ENCODE measurements at regions of chr12 and their contacts with region 1.

Region 1: GRCh38 chr12:123713398-123713797 is 1.2 kb downstream of the ATP6V0A2 start:
- DNase-seq: peak; percentile 35
- ATAC-seq: peak; percentile 11
- H3K4me3 Mint-ChIP-seq: peak overlapping the region; percentile 96
- H3K27ac Mint-ChIP-seq: peak overlapping the region; percentile 96
- H3K4me1 Mint-ChIP-seq: peaks cover 46% of the 10 kb centered on the region
- H3K27me3 Mint-ChIP-seq: no peaks in the 10 kb centered on the region

Region 2: GRCh38 chr12:122888232-122888867 is 825.0 kb before region 1 on chr12:
- CTCF ChIA-PET with region 1: no interaction called
- POLR2A ChIA-PET with region 1: no interaction called
- intact Hi-C with region 1: loop called in 1 of 2 experiments (anchors 5 kb)
- DNase-seq: peak; percentile 67
- ATAC-seq: peak; percentile 78
- H3K4me3 Mint-ChIP-seq: peak overlapping the region; percentile 66
- H3K27ac Mint-ChIP-seq: peak overlapping the region; percentile 90
- H3K4me1 Mint-ChIP-seq: peaks cover 78% of the 10 kb centered on the region
- H3K27me3 Mint-ChIP-seq: peaks cover 8% of the 10 kb centered on the region

Region 3: DNA sequence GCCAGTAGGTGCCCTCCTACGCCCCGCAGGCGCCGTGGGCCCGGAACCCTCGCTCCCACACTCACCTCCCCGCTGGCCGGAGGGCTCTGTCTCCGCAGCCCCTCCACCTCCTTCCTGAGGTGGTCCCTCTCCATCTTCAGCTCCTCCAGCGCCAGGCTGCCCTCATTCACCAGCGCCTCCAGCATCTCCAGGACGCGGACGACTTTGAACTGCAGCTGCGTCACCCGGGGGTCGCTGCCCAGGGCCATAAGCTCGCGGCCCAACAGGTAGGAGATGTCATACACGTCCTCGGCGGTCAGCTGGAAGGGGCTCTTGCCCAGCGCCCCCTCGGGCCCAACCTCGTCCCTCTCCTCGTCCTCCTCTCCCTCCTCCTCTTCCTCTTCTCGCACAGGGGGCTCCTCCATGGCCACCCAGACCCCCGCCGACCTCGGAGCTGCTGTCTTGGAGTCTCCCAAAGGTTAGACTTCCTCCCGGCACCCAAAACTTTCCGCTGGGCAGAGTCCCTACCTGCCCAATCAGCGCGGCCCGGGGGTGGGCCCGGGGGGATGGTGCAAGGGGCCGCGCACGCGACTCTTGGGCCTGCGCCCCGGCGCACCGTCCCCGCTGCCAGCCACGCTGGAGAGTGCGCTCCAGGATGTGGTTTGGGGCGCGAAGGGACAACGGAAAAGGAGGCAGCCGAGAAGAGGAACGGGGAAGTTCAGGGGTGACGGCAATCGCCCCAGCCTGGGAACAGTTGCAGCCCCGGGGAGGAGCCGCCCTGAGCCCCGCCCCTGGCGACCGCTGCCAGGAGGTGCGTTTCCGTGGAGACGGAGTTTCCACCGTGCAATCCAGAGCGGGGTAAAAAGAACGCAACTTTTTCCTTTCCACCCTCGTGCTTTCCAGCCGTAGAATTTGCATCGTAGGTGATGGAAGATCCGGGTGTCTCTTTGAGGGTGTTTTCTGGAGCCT is 277.1 kb before region 1 on chr12 and contains the start of gene RILPL2:
- CTCF ChIA-PET with region 1: no interaction called
- POLR2A ChIA-PET with region 1: interaction called, 9 read pairs
- intact Hi-C with region 1: loop called in 1 of 2 experiments (anchors 2 kb)
- DNase-seq: peak; percentile 96
- ATAC-seq: peak; percentile 85
- H3K4me3 Mint-ChIP-seq: peak within 1 kb of the TSS; percentile 95
- H3K27ac Mint-ChIP-seq: peak within 1 kb of the TSS; percentile 98
- H3K4me1 Mint-ChIP-seq: peaks cover 33% of the 10 kb centered on the region
- H3K27me3 Mint-ChIP-seq: no peaks in the 10 kb centered on the region
- total RNA-seq, gene RILPL2: 10.4 to 12.1 TPM

Region 4: GRCh38 chr12:123633379-123634141 is 79.8 kb before region 1 on chr12 and contains the starts of genes EIF2B1 and GTF2H3:
- CTCF ChIA-PET with region 1: interaction called, 3 read pairs
- POLR2A ChIA-PET with region 1: interaction called, 3 read pairs
- intact Hi-C with region 1: loop called (anchors 1 to 5 kb)
- DNase-seq: peak; percentile 99
- ATAC-seq: peak; percentile 97
- H3K4me3 Mint-ChIP-seq: peak within 1 kb of the TSS; percentile 93
- H3K27ac Mint-ChIP-seq: peak within 1 kb of the TSS; percentile 96
- H3K4me1 Mint-ChIP-seq: peaks cover 19% of the 10 kb centered on the region
- H3K27me3 Mint-ChIP-seq: no peaks in the 10 kb centered on the region
- total RNA-seq, gene EIF2B1: 52.7 to 61.0 TPM
- total RNA-seq, gene GTF2H3: 60.4 to 77.1 TPM

Region 5: GRCh38 chr12:123743002-123743401 is 29.6 kb after region 1 on chr12:
- CTCF ChIA-PET with region 1: interaction called, 3 read pairs
- POLR2A ChIA-PET with region 1: interaction called, 6 read pairs
- intact Hi-C with region 1: loop called (anchors 2 kb)
- DNase-seq: no peak
- ATAC-seq: peak; percentile 39
- H3K4me3 Mint-ChIP-seq: no peak overlapping the region
- H3K27ac Mint-ChIP-seq: peak overlapping the region; percentile 74
- H3K4me1 Mint-ChIP-seq: peaks cover 32% of the 10 kb centered on the region
- H3K27me3 Mint-ChIP-seq: no peaks in the 10 kb centered on the region

Region 6: DNA sequence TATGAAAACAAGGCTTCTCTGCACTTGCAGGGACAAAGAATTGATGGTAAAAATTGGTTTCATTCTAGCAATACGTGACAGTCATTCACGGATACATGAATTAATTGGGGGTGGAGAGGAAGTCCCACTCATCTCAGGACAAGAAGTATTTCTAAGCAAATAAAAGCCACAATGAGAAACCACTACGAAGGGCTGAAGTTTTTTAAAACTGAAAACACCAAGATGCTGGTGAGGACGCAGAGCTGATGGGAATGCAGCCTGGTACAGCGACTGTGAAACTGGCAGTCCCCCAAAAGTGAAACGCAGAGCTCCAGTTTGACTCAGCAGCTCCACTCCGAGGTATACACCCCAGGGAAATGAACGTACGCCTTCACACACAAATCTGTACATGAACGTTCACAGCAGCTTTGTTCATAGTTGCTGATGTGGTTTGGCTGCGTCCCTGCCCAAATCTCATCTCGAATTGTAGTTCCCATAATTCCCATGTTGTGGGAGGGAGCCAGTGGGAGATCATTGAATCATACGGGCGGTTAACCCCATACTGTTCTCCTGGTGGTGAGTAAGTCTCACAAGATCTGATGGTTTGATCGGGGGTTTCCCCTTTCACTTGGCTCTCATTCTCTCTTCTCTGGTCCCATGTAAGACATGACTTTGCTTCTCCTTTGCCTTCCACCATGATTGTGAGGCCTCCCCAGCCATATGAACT is 1061.2 kb after region 1 on chr12:
- CTCF ChIA-PET with region 1: interaction called, 3 read pairs
- POLR2A ChIA-PET with region 1: no interaction called
- intact Hi-C with region 1: loop called in 1 of 2 experiments (anchors 1 kb)
- DNase-seq: peak; percentile 92
- ATAC-seq: peak; percentile 89
- H3K4me3 Mint-ChIP-seq: peak overlapping the region; percentile 55
- H3K27ac Mint-ChIP-seq: peak overlapping the region; percentile 83
- H3K4me1 Mint-ChIP-seq: peaks cover 46% of the 10 kb centered on the region
- H3K27me3 Mint-ChIP-seq: peaks cover 12% of the 10 kb centered on the region

Region 7: GRCh38 chr12:124927201-124928094 is 1214.0 kb after region 1 on chr12:
- CTCF ChIA-PET with region 1: no interaction called
- POLR2A ChIA-PET with region 1: no interaction called
- intact Hi-C with region 1: no loop called
- DNase-seq: peak; percentile 96
- ATAC-seq: peak; percentile 81
- H3K4me3 Mint-ChIP-seq: peak overlapping the region; percentile 98
- H3K27ac Mint-ChIP-seq: peak overlapping the region; percentile 97
- H3K4me1 Mint-ChIP-seq: peaks cover 33% of the 10 kb centered on the region
- H3K27me3 Mint-ChIP-seq: peaks cover 2% of the 10 kb centered on the region

Measured in activated CD4-positive, alpha-beta T cell treated with anti-CD3 and anti-CD28 coated beads for 36 hours (primary cell).